Calu3 (cell line): ENCODE measurements at regions of chr17 and their contacts with region 1.

Region 1: GRCh38 chr17:51820252-51820651 is 338.3 kb downstream of the CA10 start:
- DNase-seq: peak; percentile 55
- H3K4me3 Mint-ChIP-seq: no peak overlapping the region
- H3K27ac Mint-ChIP-seq: no peak overlapping the region
- H3K4me1 Mint-ChIP-seq: peaks cover 36% of the 10 kb centered on the region
- H3K27me3 Mint-ChIP-seq: peaks cover 23% of the 10 kb centered on the region
- CTCF ChIP-seq: no peak

Region 2: GRCh38 chr17:51833620-51834019 is 13.4 kb after region 1 on chr17:
- CTCF ChIA-PET with region 1: interaction called, 11 read pairs
- intact Hi-C with region 1: no loop called
- DNase-seq: no peak
- H3K4me3 Mint-ChIP-seq: no peak overlapping the region
- H3K27ac Mint-ChIP-seq: no peak overlapping the region
- H3K4me1 Mint-ChIP-seq: no peaks in the 10 kb centered on the region
- H3K27me3 Mint-ChIP-seq: peaks cover 100% of the 10 kb centered on the region
- CTCF ChIP-seq: no peak